ENCODE measurements at regions of chr1 and their contacts with region 1.

Region 1: DNA sequence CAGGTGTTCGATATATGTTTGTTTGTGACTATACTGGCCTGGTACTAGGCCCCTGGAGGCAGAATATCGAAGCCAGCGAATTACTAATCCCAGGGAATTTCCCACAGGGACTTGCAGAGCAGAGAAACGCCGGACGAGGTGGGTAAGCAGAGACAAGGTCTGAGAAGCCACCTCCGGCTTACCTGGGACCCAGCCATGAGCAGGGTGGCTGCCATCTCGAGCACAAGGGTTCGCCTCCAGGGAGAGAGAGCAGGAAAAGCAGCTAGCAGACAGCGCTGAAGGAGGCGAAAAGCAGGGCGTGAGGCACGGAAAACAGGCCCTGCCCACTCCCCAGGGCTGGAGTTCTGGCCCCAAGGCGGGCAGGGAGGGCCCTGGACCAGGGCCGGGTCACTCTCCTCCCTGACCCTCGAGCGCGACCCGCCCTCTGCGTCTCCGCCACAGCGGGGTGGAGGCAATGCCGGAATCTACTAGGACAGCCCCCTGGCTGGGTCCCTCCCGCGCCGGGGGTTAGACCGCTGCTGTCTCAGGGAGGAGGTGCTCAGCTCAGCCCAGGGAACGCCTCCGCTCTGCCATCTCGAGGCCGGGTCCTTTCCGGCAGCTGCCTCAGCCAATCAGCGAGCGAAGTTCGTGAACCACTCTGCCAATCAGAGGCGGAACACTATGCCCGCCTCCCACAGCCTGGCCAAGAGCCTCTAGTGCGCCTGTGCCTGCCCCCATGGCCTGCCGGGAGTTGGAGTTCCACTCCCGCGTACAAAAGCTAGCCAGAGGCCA is 1.7 kb downstream of the ZNF436 start:
- DNase-seq: peak; percentile 84 to 98 (median 96)
- ATAC-seq: peak; percentile 95
- H3K4me3 ChIP-seq: peak overlapping the region; percentile 100
- H3K4me3 Mint-ChIP-seq: peak overlapping the region; percentile 87 to 100 (median 97)
- H3K27ac ChIP-seq: peak overlapping the region; percentile 91
- H3K27ac Mint-ChIP-seq: peak overlapping the region; percentile 93 to 99 (median 97)
- H3K4me1 ChIP-seq: peaks cover 6 to 8% of the 10 kb centered on the region in 2 donors
- H3K4me1 Mint-ChIP-seq: peaks cover 25 to 41% (median 36%) of the 10 kb centered on the region in 7 donors
- H3K27me3 ChIP-seq: no peaks in the 10 kb centered on the region
- H3K27me3 Mint-ChIP-seq: no peaks in the 10 kb centered on the region

Region 2: GRCh38 chr1:22451702-22452474 is 916.1 kb before region 1 on chr1 and contains the start of gene ZBTB40:
- CTCF ChIA-PET with region 1: no interaction called
- POLR2A ChIA-PET with region 1: no interaction called
- intact Hi-C with region 1: loop called in 1 of 2 experiments (anchors 2 kb)
- DNase-seq: peak; percentile 92 to 96 (median 94)
- ATAC-seq: peak; percentile 98
- H3K4me3 ChIP-seq: peak within 1 kb of the TSS; percentile 83
- H3K4me3 Mint-ChIP-seq: peak within 1 kb of the TSS; percentile 86 to 98 (median 92)
- H3K27ac ChIP-seq: peak within 1 kb of the TSS; percentile 85
- H3K27ac Mint-ChIP-seq: peak within 1 kb of the TSS; percentile 91 to 98 (median 95)
- H3K4me1 ChIP-seq: peaks cover 4 to 10% of the 10 kb centered on the region in 2 donors
- H3K4me1 Mint-ChIP-seq: peaks cover 11 to 52% (median 47%) of the 10 kb centered on the region in 7 donors
- H3K27me3 ChIP-seq: no peaks in the 10 kb centered on the region
- H3K27me3 Mint-ChIP-seq: peaks cover 0 to 4% (median 0%) of the 10 kb centered on the region in 5 donors
- total RNA-seq, gene ZBTB40: 23.1 to 60.6 (median 43.5) TPM

Region 3: GRCh38 chr1:23177031-23177430 is 190.9 kb before region 1 on chr1:
- CTCF ChIA-PET with region 1: no interaction called
- POLR2A ChIA-PET with region 1: no interaction called
- intact Hi-C with region 1: no loop called
- DNase-seq: no peak
- ATAC-seq: no peak
- H3K4me3 ChIP-seq: peak overlapping the region; percentile 35
- H3K4me3 Mint-ChIP-seq: peak overlapping the region in 9 of 10 donors; percentile 65 to 82 (median 70)
- H3K27ac ChIP-seq: no peak overlapping the region
- H3K27ac Mint-ChIP-seq: no peak overlapping the region
- H3K4me1 ChIP-seq: no peaks in the 10 kb centered on the region
- H3K4me1 Mint-ChIP-seq: peaks cover 0 to 20% (median 15%) of the 10 kb centered on the region in 7 donors
- H3K27me3 ChIP-seq: no peaks in the 10 kb centered on the region
- H3K27me3 Mint-ChIP-seq: peaks cover 0 to 36% (median 5%) of the 10 kb centered on the region in 5 donors

Region 4: GRCh38 chr1:23224714-23225648 is 143.0 kb before region 1 on chr1:
- CTCF ChIA-PET with region 1: no interaction called
- POLR2A ChIA-PET with region 1: no interaction called
- intact Hi-C with region 1: no loop called
- DNase-seq: no peak
- ATAC-seq: no peak
- H3K4me3 ChIP-seq: no peak overlapping the region
- H3K4me3 Mint-ChIP-seq: no peak overlapping the region
- H3K27ac ChIP-seq: no peak overlapping the region
- H3K27ac Mint-ChIP-seq: no peak overlapping the region
- H3K4me1 ChIP-seq: no peaks in the 10 kb centered on the region
- H3K4me1 Mint-ChIP-seq: no peaks in the 10 kb centered on the region
- H3K27me3 ChIP-seq: no peaks in the 10 kb centered on the region
- H3K27me3 Mint-ChIP-seq: peaks cover 23 to 49% (median 27%) of the 10 kb centered on the region in 5 donors

Region 5: GRCh38 chr1:23344111-23344986 is 23.6 kb before region 1 on chr1 and contains the start of gene HNRNPR:
- CTCF ChIA-PET with region 1: interaction called, 3 read pairs
- POLR2A ChIA-PET with region 1: interaction called, 62 read pairs
- intact Hi-C with region 1: loop called (anchors 1 kb)
- DNase-seq: peak; percentile 90 to 99 (median 97)
- ATAC-seq: peak; percentile 97
- H3K4me3 ChIP-seq: peak within 1 kb of the TSS; percentile 89
- H3K4me3 Mint-ChIP-seq: peak within 1 kb of the TSS; percentile 81 to 100 (median 94)
- H3K27ac ChIP-seq: peak within 1 kb of the TSS; percentile 83
- H3K27ac Mint-ChIP-seq: peak within 1 kb of the TSS; percentile 89 to 98 (median 97)
- H3K4me1 ChIP-seq: peaks cover 25 to 28% of the 10 kb centered on the region in 2 donors
- H3K4me1 Mint-ChIP-seq: peaks cover 34 to 47% (median 45%) of the 10 kb centered on the region in 7 donors
- H3K27me3 ChIP-seq: no peaks in the 10 kb centered on the region
- H3K27me3 Mint-ChIP-seq: no peaks in the 10 kb centered on the region
- total RNA-seq, gene HNRNPR: 97.4 to 235 (median 117) TPM

Region 6: DNA sequence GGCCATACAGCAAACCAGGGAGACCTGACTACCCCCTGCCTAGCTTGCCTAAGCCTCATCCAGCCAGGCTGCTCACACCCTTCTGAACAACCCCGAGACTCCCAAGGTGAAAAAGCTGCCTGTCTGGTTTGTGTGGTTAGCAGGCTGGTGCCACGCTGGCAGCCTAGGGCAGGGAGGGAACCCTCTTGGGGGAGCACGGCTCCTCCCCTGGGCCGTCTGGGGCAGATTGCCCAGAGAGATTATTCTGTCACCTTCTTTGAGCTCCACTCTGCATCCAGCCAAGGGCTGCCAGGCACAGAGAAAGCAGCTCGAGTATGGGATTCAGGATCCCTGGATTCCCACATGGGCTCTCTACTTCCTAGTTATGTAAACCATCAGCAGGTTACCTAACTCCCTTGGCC is 84.0 kb after region 1 on chr1:
- CTCF ChIA-PET with region 1: no interaction called
- POLR2A ChIA-PET with region 1: no interaction called
- intact Hi-C with region 1: no loop called
- DNase-seq: peak in 7 of 9 donors; percentile 19 to 55 (median 38)
- ATAC-seq: peak; percentile 88
- H3K4me3 ChIP-seq: no peak overlapping the region
- H3K4me3 Mint-ChIP-seq: no peak overlapping the region
- H3K27ac ChIP-seq: no peak overlapping the region
- H3K27ac Mint-ChIP-seq: peak overlapping the region in 4 of 9 donors; percentile 2 to 45 (median 12)
- H3K4me1 ChIP-seq: peaks cover 13 to 14% of the 10 kb centered on the region in 2 donors
- H3K4me1 Mint-ChIP-seq: peaks cover 4 to 18% (median 13%) of the 10 kb centered on the region in 7 donors
- H3K27me3 ChIP-seq: no peaks in the 10 kb centered on the region
- H3K27me3 Mint-ChIP-seq: peaks cover 0 to 26% (median 6%) of the 10 kb centered on the region in 5 donors

Region 7: GRCh38 chr1:23484253-23485001 is 116.5 kb after region 1 on chr1:
- CTCF ChIA-PET with region 1: no interaction called
- POLR2A ChIA-PET with region 1: no interaction called
- intact Hi-C with region 1: loop called (anchors 1 kb)
- DNase-seq: peak; percentile 76 to 92 (median 90)
- ATAC-seq: peak; percentile 94
- H3K4me3 ChIP-seq: peak overlapping the region; percentile 67
- H3K4me3 Mint-ChIP-seq: peak overlapping the region; percentile 74 to 97 (median 88)
- H3K27ac ChIP-seq: peak overlapping the region; percentile 63
- H3K27ac Mint-ChIP-seq: peak overlapping the region; percentile 65 to 83 (median 76)
- H3K4me1 ChIP-seq: peaks cover 13% of the 10 kb centered on the region in 2 donors
- H3K4me1 Mint-ChIP-seq: peaks cover 12 to 20% (median 15%) of the 10 kb centered on the region in 7 donors
- H3K27me3 ChIP-seq: no peaks in the 10 kb centered on the region
- H3K27me3 Mint-ChIP-seq: peaks cover 0 to 73% (median 13%) of the 10 kb centered on the region in 5 donors

Region 8: DNA sequence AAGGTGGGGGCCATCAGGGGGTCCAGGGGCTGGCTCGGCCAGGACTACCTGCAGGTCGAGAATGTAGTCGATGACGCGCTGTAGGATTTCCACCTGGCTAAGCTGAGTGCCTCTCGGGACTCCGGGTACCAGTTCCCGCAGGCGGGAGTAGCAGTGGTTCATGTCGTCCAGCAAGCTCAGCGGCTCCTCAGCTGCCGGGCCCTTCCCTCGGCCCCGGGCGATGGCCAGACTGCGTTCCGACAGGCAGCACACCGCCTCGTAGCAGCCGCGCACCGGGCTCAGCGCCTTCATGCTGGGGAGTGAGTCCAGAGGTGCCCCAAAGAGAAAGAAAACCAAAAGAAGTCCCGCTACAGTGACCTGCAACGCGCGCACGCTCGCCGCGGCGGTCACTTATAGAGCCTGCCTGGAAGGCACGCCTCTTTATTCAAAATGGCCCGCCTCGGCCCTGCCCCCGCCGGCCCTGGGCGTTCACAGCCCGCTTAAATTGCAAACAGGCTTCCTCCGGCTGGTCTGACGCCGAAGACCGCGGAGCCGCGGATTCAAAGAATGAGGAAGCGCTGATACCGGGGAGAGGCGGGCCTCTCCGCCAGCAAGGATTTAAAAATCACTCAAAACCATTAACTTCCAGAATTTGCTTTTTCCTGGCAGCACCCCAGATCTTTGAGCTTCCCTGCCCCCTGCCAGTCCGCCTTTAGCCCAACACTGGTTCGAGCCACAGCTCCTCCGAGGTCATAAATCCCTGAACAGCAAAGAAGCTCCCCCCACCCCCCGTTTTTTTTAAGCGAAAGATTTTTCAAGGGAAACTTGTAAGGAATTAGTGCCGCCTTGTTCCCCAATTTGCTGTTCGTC is 191.4 kb after region 1 on chr1 and contains the start of gene ID3:
- CTCF ChIA-PET with region 1: no interaction called
- POLR2A ChIA-PET with region 1: interaction called, 8 read pairs
- intact Hi-C with region 1: loop called in 1 of 2 experiments (anchors 1 kb)
- DNase-seq: peak; percentile 70 to 96 (median 86)
- ATAC-seq: peak; percentile 77
- H3K4me3 ChIP-seq: peak within 1 kb of the TSS; percentile 94
- H3K4me3 Mint-ChIP-seq: peak within 1 kb of the TSS; percentile 85 to 98 (median 93)
- H3K27ac ChIP-seq: peak within 1 kb of the TSS; percentile 91
- H3K27ac Mint-ChIP-seq: peak within 1 kb of the TSS; percentile 85 to 98 (median 91)
- H3K4me1 ChIP-seq: peaks cover 16 to 41% of the 10 kb centered on the region in 2 donors
- H3K4me1 Mint-ChIP-seq: peaks cover 40 to 80% (median 74%) of the 10 kb centered on the region in 7 donors
- H3K27me3 ChIP-seq: no peaks in the 10 kb centered on the region
- H3K27me3 Mint-ChIP-seq: peaks cover 0 to 46% (median 0%) of the 10 kb centered on the region in 5 donors
- total RNA-seq, gene ID3: 14.8 to 89.4 (median 34.1) TPM

Region 9: GRCh38 chr1:23743287-23744052 is 375.5 kb after region 1 on chr1 and contains the start of gene ELOA:
- CTCF ChIA-PET with region 1: no interaction called
- POLR2A ChIA-PET with region 1: no interaction called
- intact Hi-C with region 1: loop called in 1 of 2 experiments (anchors 2 kb)
- DNase-seq: peak; percentile 68 to 84 (median 77)
- ATAC-seq: peak; percentile 98
- H3K4me3 ChIP-seq: peak within 1 kb of the TSS; percentile 87
- H3K4me3 Mint-ChIP-seq: peak within 1 kb of the TSS; percentile 90 to 93 (median 92)
- H3K27ac ChIP-seq: peak within 1 kb of the TSS; percentile 96
- H3K27ac Mint-ChIP-seq: peak within 1 kb of the TSS; percentile 80 to 95 (median 91)
- H3K4me1 ChIP-seq: peaks cover 22 to 39% of the 10 kb centered on the region in 2 donors
- H3K4me1 Mint-ChIP-seq: peaks cover 35 to 52% (median 49%) of the 10 kb centered on the region in 7 donors
- H3K27me3 ChIP-seq: no peaks in the 10 kb centered on the region
- H3K27me3 Mint-ChIP-seq: no peaks in the 10 kb centered on the region
- total RNA-seq, gene ELOA: 28.0 to 36.1 (median 30.4) TPM

Measured in naive thymus-derived CD4-positive, alpha-beta T cell (primary cell).